Naive thymus-derived CD4-positive, alpha-beta T cell (primary cell): ENCODE measurements at regions of chr11 and their contacts with region 1.

Region 1: DNA sequence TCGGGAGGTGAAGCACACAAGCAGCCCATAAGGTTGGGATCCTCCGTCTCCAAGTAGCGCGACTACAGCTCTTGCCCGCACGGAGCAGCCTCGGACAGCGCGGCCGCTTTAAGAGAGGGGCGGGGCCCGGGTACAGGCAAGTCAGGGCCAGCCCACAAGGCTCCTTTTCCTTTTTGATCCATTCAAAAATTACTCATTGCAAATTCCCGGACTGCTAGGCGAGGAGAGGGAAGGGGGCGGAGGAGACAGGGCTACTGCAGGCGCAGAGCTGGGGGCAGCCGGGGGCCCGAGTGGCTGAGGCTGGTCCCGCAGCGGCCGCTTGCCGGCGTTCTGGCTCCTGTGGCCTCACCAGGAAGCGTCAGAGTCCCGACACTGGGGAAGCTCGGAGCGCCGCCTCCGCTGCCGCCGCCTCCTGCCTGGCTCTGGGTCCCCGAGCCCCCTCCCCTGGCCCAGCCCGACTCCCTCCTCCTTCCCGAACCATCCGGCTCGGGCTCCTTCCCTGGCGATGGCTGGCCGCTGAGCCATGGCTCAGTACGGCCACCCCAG is at the start of gene UBASH3B:
- DNase-seq: peak; percentile 49 to 65 (median 62)
- ATAC-seq: peak; percentile 82
- H3K4me3 ChIP-seq: peak within 1 kb of the TSS; percentile 68
- H3K4me3 Mint-ChIP-seq: peak within 1 kb of the TSS; percentile 91 to 99 (median 98)
- H3K27ac ChIP-seq: peak within 1 kb of the TSS; percentile 83
- H3K27ac Mint-ChIP-seq: peak within 1 kb of the TSS; percentile 73 to 97 (median 94)
- H3K4me1 ChIP-seq: peaks cover 4 to 29% of the 10 kb centered on the region in 2 donors
- H3K4me1 Mint-ChIP-seq: peaks cover 18 to 50% (median 43%) of the 10 kb centered on the region in 7 donors
- H3K27me3 ChIP-seq: no peaks in the 10 kb centered on the region
- H3K27me3 Mint-ChIP-seq: peaks cover 0 to 60% (median 0%) of the 10 kb centered on the region in 5 donors
- total RNA-seq, gene UBASH3B: 10.4 to 49.8 (median 43.2) TPM

Region 2: DNA sequence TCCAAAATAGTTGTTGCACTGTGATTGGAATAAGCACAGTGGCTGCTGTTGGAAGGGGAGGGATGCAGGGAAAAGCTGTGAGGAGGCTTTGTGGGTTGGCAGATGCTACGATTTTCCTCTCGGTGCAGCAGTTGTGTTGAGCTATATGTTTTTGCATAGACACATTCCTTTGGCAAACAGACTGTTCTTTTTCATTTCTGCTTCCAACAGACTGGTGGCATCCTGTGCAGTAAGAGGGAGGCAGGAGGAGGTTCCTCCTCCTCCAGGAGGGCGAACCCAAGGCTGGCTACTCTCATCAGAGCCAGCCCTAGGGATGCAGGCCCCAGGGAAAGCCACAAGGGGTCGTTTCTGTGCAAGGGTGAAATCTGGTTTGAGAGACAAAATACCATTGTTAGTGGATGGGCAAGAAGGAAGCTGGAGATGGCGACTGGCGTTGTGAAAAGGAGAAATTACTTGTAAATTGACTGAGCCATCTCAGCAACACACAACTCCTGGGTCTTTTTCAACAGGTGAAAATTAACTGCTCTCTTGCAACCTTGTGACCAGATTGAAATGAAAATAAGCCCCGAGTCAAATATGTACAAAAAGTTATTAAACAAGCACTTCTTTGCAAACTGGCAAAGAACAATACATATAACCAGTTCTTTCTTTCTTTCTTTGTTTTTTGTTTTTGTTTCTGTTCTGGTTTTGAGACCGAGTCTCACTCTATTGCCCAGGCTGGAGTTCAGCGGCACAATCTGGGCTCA is 26.6 kb before region 1 on chr11:
- CTCF ChIA-PET with region 1: interaction called, 6 read pairs
- POLR2A ChIA-PET with region 1: interaction called, 3 read pairs
- intact Hi-C with region 1: loop called in 1 of 2 experiments (anchors 1 kb)
- DNase-seq: peak; percentile 46 to 70 (median 62)
- ATAC-seq: peak; percentile 93
- H3K4me3 ChIP-seq: no peak overlapping the region
- H3K4me3 Mint-ChIP-seq: no peak overlapping the region
- H3K27ac ChIP-seq: no peak overlapping the region
- H3K27ac Mint-ChIP-seq: peak overlapping the region in 4 of 9 donors; percentile 18 to 49 (median 24)
- H3K4me1 ChIP-seq: no peaks in the 10 kb centered on the region
- H3K4me1 Mint-ChIP-seq: peaks cover 0 to 30% (median 16%) of the 10 kb centered on the region in 7 donors
- H3K27me3 ChIP-seq: no peaks in the 10 kb centered on the region
- H3K27me3 Mint-ChIP-seq: peaks cover 0 to 16% (median 0%) of the 10 kb centered on the region in 5 donors

Region 3: GRCh38 chr11:122673701-122674100 is 18.1 kb after region 1 on chr11:
- CTCF ChIA-PET with region 1: interaction called, 17 read pairs
- POLR2A ChIA-PET with region 1: interaction called, 46 read pairs
- intact Hi-C with region 1: loop called (anchors 1 to 2 kb)
- DNase-seq: peak in 1 of 9 donors; percentile 20
- ATAC-seq: no peak
- H3K4me3 ChIP-seq: no peak overlapping the region
- H3K4me3 Mint-ChIP-seq: peak overlapping the region in 7 of 10 donors; percentile 2 to 70 (median 37)
- H3K27ac ChIP-seq: peak overlapping the region; percentile 36
- H3K27ac Mint-ChIP-seq: peak overlapping the region in 8 of 9 donors; percentile 48 to 99 (median 88)
- H3K4me1 ChIP-seq: peaks cover 43 to 70% of the 10 kb centered on the region in 2 donors
- H3K4me1 Mint-ChIP-seq: peaks cover 32 to 98% (median 83%) of the 10 kb centered on the region in 7 donors
- H3K27me3 ChIP-seq: no peaks in the 10 kb centered on the region
- H3K27me3 Mint-ChIP-seq: peaks cover 0 to 3% (median 0%) of the 10 kb centered on the region in 5 donors

Region 4: DNA sequence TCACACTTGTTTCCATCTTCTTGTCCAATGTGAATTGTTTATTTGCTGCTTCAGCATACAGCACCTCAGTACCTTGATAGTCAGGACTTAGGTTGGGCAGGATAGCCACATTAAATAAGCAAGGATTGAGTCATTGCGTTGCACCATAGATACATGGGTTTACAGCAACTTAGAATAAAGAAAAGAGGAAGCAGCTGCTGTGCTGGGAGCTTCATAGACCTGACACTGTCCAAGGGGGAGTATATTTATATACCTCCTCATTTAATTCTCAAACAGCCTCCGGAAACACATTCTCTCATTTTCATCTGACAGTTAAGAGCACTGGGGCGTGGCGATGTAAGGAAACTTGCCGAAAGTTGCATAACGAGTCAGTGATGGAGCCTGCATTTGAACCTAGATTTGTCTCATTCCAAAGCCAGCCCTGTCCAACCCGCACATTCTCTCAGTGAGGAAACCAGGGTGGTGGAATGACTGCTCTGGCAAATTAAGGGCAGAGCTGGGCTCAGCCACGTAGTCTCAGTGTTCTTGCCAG is 42.1 kb after region 1 on chr11:
- CTCF ChIA-PET with region 1: interaction called, 23 read pairs
- POLR2A ChIA-PET with region 1: interaction called, 39 read pairs
- intact Hi-C with region 1: loop called (anchors 1 kb)
- DNase-seq: peak in 7 of 9 donors; percentile 53 to 78 (median 69)
- ATAC-seq: peak; percentile 85
- H3K4me3 ChIP-seq: peak overlapping the region; percentile 33
- H3K4me3 Mint-ChIP-seq: peak overlapping the region; percentile 61 to 93 (median 82)
- H3K27ac ChIP-seq: peak overlapping the region; percentile 75
- H3K27ac Mint-ChIP-seq: peak overlapping the region; percentile 88 to 99 (median 96)
- H3K4me1 ChIP-seq: peaks cover 34 to 62% of the 10 kb centered on the region in 2 donors
- H3K4me1 Mint-ChIP-seq: peaks cover 53 to 99% (median 88%) of the 10 kb centered on the region in 7 donors
- H3K27me3 ChIP-seq: no peaks in the 10 kb centered on the region
- H3K27me3 Mint-ChIP-seq: peaks cover 0 to 3% (median 0%) of the 10 kb centered on the region in 5 donors

Region 5: DNA sequence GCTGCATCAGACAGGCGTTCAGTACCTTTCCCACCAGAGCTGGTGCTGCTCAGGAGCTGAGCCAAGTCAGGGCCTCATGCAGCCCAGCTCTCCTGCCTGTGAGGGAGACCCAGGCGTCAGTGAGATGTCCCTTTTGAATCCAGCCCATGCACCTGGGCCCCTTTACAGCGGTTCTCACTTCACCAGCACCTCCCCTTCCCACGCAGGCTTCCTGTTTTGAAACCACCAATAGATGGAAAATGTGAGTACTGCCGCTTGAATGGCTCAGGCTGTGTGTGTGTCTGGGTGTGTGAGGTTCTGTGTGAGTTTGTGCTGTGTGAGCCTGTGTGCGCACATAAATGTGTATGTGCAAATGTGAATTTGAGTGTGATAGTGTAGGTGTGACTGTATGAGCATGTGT is 88.3 kb after region 1 on chr11:
- CTCF ChIA-PET with region 1: interaction called, 42 read pairs
- POLR2A ChIA-PET with region 1: interaction called, 16 read pairs
- intact Hi-C with region 1: loop called (anchors 1 kb)
- DNase-seq: peak; percentile 28 to 90 (median 80)
- ATAC-seq: peak; percentile 75
- H3K4me3 ChIP-seq: peak overlapping the region; percentile 39
- H3K4me3 Mint-ChIP-seq: no peak overlapping the region
- H3K27ac ChIP-seq: peak overlapping the region; percentile 84
- H3K27ac Mint-ChIP-seq: no peak overlapping the region
- H3K4me1 ChIP-seq: peaks cover 58 to 66% of the 10 kb centered on the region in 2 donors
- H3K4me1 Mint-ChIP-seq: peaks cover 0 to 40% (median 18%) of the 10 kb centered on the region in 7 donors
- H3K27me3 ChIP-seq: no peaks in the 10 kb centered on the region
- H3K27me3 Mint-ChIP-seq: peaks cover 0 to 21% (median 0%) of the 10 kb centered on the region in 5 donors

Region 6: DNA sequence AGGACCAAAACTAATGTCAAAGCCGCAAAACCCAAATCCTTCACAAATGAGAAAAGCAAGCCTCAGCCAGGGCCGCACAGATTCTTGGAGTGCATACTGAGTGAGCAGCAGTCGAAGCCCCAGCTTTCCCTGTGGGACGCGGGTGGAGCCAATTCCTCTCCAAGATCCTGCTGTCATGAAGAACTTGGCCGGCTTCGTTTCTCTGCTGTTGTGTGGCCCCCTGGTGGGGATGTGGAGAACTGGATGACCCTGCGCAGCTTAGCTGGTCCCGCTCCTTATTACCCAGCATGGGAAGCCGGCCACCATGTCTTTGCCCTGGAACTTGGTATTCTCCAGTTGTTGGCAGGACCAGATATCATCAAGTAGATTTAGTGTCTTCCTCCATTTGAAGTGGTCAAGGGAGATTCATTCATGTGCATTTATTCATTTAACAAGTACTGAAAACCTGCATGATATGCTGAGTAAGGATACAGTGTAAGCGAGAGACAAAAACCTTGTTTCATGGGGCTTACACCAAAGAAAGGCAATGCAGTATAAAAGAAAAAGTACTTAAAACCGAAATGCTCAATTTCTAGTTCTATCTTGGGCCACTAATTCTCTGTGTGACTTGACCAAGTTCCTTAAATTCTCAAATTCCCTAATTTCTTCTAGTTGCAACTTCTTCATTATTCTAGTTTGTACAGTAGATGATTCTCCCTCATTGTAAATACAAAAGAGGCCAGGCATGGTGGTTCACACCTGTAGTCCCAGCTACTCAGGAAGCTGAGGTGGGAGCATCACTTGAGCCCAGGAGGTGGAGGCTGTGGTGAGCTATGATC is 126.0 kb after region 1 on chr11:
- CTCF ChIA-PET with region 1: interaction called, 6 read pairs
- POLR2A ChIA-PET with region 1: interaction called, 5 read pairs
- intact Hi-C with region 1: loop called in 1 of 2 experiments (anchors 1 kb)
- DNase-seq: peak; percentile 50 to 80 (median 69)
- ATAC-seq: peak; percentile 95
- H3K4me3 ChIP-seq: no peak overlapping the region
- H3K4me3 Mint-ChIP-seq: no peak overlapping the region
- H3K27ac ChIP-seq: no peak overlapping the region
- H3K27ac Mint-ChIP-seq: peak overlapping the region in 2 of 9 donors; percentile 14 to 56
- H3K4me1 ChIP-seq: no peaks in the 10 kb centered on the region
- H3K4me1 Mint-ChIP-seq: peaks cover 0 to 22% (median 11%) of the 10 kb centered on the region in 7 donors
- H3K27me3 ChIP-seq: no peaks in the 10 kb centered on the region
- H3K27me3 Mint-ChIP-seq: no peaks in the 10 kb centered on the region